Dorsolateral prefrontal cortex (tissue), 120 donors: ENCODE measurements at regions of chr7 and their contacts with region 1.

Region 1: DNA sequence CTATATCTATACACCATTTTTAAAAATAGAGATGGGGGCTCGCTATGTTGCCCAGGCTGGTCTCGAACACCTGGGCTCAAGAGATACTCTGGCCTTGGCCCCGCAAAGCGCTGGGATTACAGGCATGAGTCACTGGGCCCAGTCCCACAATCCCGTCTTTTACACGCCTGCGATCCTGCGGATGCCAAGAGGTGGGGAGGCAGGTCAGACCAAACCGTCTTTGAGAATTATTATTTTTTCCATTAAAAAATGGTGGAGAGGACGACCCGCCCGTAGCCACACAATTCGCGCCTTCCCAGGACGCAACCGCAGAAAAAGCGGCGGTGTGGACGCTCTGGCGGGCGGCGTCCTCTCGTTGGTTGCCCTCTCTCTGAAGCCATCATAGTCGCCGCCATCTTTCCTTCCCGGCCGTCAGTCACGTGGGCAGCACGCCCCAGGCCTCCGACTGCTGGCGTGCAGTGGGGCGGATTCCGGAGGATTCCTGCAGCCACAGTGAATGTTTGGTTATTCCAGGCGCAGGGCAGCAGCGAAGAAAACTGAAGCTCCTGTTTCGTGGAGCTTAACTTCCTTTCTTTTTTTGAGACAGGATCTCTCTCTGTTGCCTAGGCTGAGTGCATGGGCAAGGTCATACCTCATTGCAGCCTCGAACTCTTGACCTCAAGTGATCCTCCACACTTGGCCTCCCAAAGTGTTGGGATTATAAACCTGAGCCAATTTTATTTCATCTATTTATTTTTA is 9.9 kb upstream of the EPHB4 start:
- DNase-seq: peak; percentile 88 to 95 (median 92)
- H3K4me3 ChIP-seq: peak overlapping the region; percentile 24 to 77 (median 62)
- H3K27ac ChIP-seq: peak overlapping the region; percentile 18 to 96 (median 86)
- H3K27me3 ChIP-seq: no peaks in the 10 kb centered on the region
- CTCF ChIP-seq: peak in 50 of 56 donors; percentile 4 to 68 (median 39)

Region 2: DNA sequence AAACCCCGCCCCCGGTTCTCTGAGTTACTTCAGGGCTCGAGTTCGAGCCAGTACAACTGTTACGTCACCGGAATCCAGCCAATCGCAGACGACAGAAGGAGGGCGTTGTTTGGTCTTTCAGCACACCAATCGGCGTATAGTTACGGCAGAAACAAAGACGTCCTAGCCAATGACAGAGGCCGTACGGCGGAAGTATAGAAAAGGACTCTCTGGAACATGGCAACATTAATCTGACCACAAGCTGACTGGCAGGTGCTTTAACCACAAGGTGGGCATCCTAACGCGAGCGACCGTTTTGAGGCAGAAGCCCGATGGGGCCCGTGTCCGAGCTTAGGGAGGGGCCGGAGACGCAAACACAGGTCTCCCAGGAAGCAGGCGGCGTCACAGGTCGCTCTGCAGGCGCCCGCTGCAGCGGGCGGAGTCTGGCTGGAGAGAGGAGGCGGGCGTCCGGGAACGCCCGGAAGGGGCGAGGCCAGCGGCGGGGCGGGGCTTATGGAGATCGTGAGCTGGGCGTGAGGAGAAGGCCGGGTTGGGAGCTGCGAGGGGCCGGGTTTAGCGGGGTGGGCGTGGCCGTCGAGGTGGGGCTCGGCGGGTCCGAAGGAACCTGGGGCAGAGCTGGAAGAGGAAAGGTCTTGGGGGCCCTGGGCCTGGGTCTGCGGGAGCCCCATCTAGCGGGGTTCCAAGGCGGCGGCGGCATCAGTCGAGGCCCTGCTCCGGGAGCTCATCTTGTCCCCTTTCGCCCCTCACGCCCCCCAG is 225.1 kb before region 1 on chr7 and contains the start of gene MOSPD3:
- intact Hi-C with region 1: loop called in 1 of 2 experiments (anchors 10 kb)
- DNase-seq: peak; percentile 96 to 100 (median 99)
- H3K4me3 ChIP-seq: peak within 1 kb of the TSS; percentile 64 to 96 (median 86)
- H3K27ac ChIP-seq: peak within 1 kb of the TSS in 58 of 59 donors; percentile 49 to 99 (median 94)
- H3K27me3 ChIP-seq: no peaks in the 10 kb centered on the region
- CTCF ChIP-seq: peak in 21 of 56 donors; percentile 2 to 62 (median 22)
- total RNA-seq, gene MOSPD3: 11.7 to 26.4 (median 18.7) TPM

Region 3: GRCh38 chr7:100705753-100706671 is 131.3 kb before region 1 on chr7 and contains the start of gene POP7:
- intact Hi-C with region 1: loop called in 1 of 2 experiments (anchors 5 kb)
- DNase-seq: peak; percentile 94 to 97 (median 96)
- H3K4me3 ChIP-seq: peak within 1 kb of the TSS; percentile 62 to 100 (median 88)
- H3K27ac ChIP-seq: peak within 1 kb of the TSS; percentile 21 to 98 (median 92)
- H3K27me3 ChIP-seq: no peaks in the 10 kb centered on the region
- CTCF ChIP-seq: peak in 5 of 56 donors; percentile 2 to 31 (median 20)
- total RNA-seq, gene POP7: 20.7 to 61.9 (median 42.4) TPM

Region 4: DNA sequence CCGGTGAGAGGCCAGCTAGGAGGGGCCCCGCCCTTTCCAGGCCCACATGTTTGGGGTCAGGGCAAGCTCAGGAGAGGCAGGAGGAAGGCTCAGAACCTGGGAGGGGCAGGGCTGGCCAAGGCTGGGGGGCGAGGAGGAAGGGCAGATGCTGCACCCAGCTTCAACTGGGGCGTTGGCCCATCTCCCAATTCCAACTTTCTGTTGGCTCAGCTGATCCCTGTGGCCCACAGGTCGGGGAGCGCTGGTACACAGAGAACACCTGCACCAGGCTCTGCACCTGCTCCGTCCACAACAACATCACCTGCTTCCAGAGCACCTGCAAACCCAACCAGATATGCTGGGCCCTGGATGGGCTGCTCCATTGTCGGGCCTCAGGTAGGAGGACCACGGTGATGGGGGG is 63.8 kb before region 1 on chr7:
- intact Hi-C with region 1: no loop called
- DNase-seq: no peak
- H3K4me3 ChIP-seq: no peak overlapping the region
- H3K27ac ChIP-seq: no peak overlapping the region
- H3K27me3 ChIP-seq: peaks cover 0 to 5% (median 0%) of the 10 kb centered on the region in 45 donors
- CTCF ChIP-seq: no peak

Region 5: DNA sequence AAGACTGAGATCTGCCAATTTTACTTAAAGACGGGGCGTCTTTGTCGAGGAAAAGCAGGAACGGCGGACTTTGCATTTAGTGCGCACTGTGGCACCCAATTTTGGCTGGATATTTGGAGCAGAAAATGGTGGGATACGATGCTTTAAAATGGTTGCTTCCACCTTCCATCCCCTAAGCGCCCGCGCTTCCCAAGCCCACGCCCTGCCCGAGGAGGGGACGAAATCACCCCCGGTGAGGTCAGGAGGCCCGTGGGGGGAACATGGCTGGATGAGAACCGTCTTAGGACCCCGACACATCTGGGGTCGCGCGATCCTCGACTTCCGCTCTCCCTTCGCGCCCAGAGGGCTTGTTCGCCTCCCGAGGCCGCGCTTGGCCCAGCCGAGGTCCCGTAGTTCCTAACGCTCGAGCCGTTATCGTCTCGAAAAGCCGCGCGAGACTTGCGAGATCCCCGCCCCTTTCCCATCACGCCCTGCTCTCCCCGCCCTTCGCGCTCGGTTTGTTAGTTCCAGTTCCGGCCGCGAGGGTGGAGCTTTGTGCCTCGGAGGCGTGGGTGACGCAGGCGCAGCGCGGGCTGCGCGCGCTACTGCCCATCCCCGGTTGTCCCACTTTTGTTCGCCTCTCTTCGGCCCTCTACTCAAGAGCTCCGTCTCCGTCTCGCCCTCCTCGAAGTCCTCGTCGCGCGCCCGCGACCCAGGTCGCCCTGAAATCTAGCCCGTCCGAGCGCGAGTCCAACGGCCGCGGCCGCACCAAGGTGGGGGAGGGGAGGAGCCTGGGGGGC is 37.5 kb after region 1 on chr7 and contains the start of gene SRRT:
- intact Hi-C with region 1: loop called (anchors 1 to 5 kb)
- DNase-seq: peak; percentile 98 to 99 (median 99)
- H3K4me3 ChIP-seq: peak within 1 kb of the TSS; percentile 69 to 100 (median 94)
- H3K27ac ChIP-seq: peak within 1 kb of the TSS; percentile 79 to 100 (median 98)
- H3K27me3 ChIP-seq: no peaks in the 10 kb centered on the region
- CTCF ChIP-seq: peak in 54 of 56 donors; percentile 9 to 72 (median 47)
- total RNA-seq, gene SRRT: 60.4 to 142 (median 97.9) TPM